ENCODE measurements at regions of chr19 and their contacts with region 1.

Region 1: GRCh38 chr19:44845612-44846454 is at the start of gene NECTIN2:
- H3K4me3 ChIP-seq: peak within 1 kb of the TSS; percentile 85
- H3K27ac ChIP-seq: peak within 1 kb of the TSS; percentile 93
- H3K4me1 ChIP-seq: peaks cover 25% of the 10 kb centered on the region
- CTCF ChIP-seq: peak; percentile 99

Region 2: DNA sequence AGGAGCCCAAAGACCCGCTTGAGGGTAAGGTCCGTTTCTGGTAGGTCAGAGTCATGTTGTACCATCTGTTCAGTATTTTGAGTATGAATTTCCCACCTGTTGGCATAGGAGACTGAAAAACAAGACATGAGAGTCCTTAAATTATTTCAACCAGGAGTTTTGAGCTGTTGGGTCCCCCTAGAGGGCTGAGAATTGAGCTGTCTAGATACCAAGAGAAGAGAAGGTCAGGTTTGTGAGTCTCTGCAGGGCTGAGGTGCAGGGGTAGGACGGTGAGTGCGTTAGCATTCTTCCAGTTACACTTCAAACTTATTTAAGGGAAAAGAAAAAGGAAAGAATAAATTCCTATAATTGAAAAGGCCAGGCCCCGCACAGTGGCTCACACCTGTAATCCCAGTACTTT is 63.1 kb before region 1 on chr19:
- CTCF ChIA-PET with region 1: interaction called, 23 read pairs
- POLR2A ChIA-PET with region 1: interaction called, 4 read pairs
- H3K4me3 ChIP-seq: no peak overlapping the region
- H3K27ac ChIP-seq: no peak overlapping the region
- H3K4me1 ChIP-seq: no peaks in the 10 kb centered on the region
- CTCF ChIP-seq: no peak

Region 3: DNA sequence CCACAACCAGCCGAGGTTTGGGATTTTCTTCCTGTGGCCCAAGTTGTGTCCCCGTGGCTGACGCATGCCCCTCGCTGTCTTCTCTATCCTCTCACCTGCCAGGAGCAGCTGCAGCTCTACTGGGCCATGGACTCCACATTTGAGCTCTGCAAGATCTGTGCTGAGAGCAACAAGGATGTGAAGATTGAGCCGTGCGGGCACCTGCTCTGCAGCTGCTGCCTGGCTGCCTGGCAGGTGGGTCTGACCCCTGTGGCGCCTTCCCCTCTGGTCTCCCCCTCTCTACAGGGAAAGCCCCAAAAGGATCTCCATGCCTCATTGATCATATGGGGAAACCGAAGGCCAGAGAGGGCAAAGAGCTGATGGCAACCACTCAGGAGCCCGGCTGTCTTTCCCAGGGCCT is 53.6 kb before region 1 on chr19:
- CTCF ChIA-PET with region 1: interaction called, 20 read pairs
- POLR2A ChIA-PET with region 1: interaction called, 3 read pairs
- H3K4me3 ChIP-seq: no peak overlapping the region
- H3K27ac ChIP-seq: no peak overlapping the region
- H3K4me1 ChIP-seq: no peaks in the 10 kb centered on the region; the same call in 1 of the 2 replicates
- CTCF ChIP-seq: no peak

Region 4: GRCh38 chr19:44800461-44800860 is 45.4 kb before region 1 on chr19:
- CTCF ChIA-PET with region 1: interaction called, 35 read pairs
- POLR2A ChIA-PET with region 1: interaction called, 3 read pairs
- H3K4me3 ChIP-seq: no peak overlapping the region
- H3K27ac ChIP-seq: no peak overlapping the region
- H3K4me1 ChIP-seq: no peaks in the 10 kb centered on the region; the same call in 1 of the 2 replicates
- CTCF ChIP-seq: peak; percentile 98

Region 5: GRCh38 chr19:44808463-44809371 is 37.1 kb before region 1 on chr19 and contains the start of gene BCAM:
- CTCF ChIA-PET with region 1: interaction called, 35 read pairs
- POLR2A ChIA-PET with region 1: interaction called, 10 read pairs
- H3K4me3 ChIP-seq: peak within 1 kb of the TSS; percentile 58
- H3K27ac ChIP-seq: peak within 1 kb of the TSS; percentile 64; the same call in 1 of the 2 replicates
- H3K4me1 ChIP-seq: peaks cover 8% of the 10 kb centered on the region
- CTCF ChIP-seq: no peak

Region 6: DNA sequence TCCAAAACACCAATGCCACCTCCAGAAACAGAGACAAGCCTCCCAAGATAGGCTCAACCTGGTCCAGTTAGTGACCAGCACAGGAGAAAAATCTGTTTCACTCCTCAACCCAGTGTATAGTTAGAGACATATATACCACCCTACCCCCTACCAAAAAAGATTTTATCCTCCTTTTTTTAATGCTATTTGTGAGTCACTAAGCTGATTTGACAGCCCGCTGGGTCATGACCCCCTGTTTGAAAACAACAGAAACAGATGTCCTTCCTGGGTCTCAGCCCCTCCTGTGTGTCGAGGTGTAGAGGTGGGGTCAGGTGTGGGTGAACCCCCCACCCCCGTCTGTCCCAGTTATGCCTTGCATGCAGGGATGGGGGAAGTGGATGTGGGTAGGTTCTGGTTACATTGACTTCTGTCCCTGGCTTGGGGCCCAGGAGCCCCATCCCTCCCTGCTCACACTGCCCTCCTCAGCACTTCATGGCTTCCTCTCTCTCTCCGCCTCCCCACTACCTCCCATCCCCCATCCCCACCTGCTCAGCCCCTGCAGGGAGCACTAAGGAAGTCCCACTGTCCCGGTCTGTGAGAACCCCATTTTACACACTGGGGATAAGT is 31.2 kb after region 1 on chr19:
- CTCF ChIA-PET with region 1: no interaction called
- POLR2A ChIA-PET with region 1: no interaction called
- H3K4me3 ChIP-seq: no peak overlapping the region
- H3K27ac ChIP-seq: no peak overlapping the region
- H3K4me1 ChIP-seq: no peaks in the 10 kb centered on the region
- CTCF ChIP-seq: no peak

Region 7: DNA sequence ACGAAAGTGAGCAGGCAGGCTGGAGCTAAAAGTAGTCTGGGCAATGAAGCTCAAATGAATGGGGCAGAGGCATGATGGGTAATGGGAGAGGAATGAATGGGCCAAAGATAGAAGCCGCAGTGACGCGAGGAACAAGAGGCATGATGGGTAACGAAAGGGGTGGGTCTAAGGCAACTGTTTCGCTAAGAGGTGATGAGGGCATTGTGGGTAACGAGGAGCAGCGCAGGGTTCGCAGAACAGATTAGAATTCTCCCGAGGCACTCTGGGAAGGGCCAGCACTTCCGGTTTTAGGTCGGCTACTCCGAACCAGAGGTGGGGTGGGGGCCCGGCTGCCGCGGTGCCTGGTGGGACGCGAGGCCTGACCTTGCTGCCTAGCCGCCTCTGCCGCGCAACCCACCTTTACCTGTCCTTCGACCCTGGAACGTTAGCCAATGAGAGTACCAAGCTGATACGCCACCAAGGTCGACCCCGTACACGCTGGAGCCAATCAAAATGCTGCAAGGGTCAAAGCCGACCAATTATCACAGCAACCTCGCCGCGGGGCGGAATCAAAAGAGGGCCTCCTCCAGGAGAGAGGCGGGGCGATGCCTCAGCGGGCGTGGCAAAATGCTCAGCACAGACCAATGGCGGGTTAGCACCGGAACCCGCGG is 44.7 kb after region 1 on chr19:
- CTCF ChIA-PET with region 1: interaction called, 5 read pairs
- POLR2A ChIA-PET with region 1: interaction called, 15 read pairs
- H3K4me3 ChIP-seq: peak overlapping the region; percentile 42
- H3K27ac ChIP-seq: peak overlapping the region; percentile 70
- H3K4me1 ChIP-seq: peaks cover 6% of the 10 kb centered on the region
- CTCF ChIP-seq: no peak

Region 8: GRCh38 chr19:45016388-45017319 is 170.8 kb after region 1 on chr19:
- CTCF ChIA-PET with region 1: no interaction called
- POLR2A ChIA-PET with region 1: no interaction called
- H3K4me3 ChIP-seq: no peak overlapping the region
- H3K27ac ChIP-seq: no peak overlapping the region
- H3K4me1 ChIP-seq: no peaks in the 10 kb centered on the region; the same call in 1 of the 2 replicates
- CTCF ChIP-seq: peak; percentile 62